Mammary epithelial cell (primary cell): ENCODE measurements at regions of chr12 and their contacts with region 1.

Region 1: GRCh38 chr12:43805860-43806736 is at the start of gene TWF1:
- DNase-seq: peak; percentile 84
- H3K4me3 ChIP-seq: peak within 1 kb of the TSS; percentile 70 to 99 (median 95)
- H3K27ac ChIP-seq: peak within 1 kb of the TSS; percentile 96
- H3K4me1 ChIP-seq: peaks cover 14% of the 10 kb centered on the region
- H3K27me3 ChIP-seq: no peaks in the 10 kb centered on the region
- CTCF ChIP-seq: peak; percentile 4 to 46
- total RNA-seq, gene TWF1: 170 to 187 TPM

Region 2: DNA sequence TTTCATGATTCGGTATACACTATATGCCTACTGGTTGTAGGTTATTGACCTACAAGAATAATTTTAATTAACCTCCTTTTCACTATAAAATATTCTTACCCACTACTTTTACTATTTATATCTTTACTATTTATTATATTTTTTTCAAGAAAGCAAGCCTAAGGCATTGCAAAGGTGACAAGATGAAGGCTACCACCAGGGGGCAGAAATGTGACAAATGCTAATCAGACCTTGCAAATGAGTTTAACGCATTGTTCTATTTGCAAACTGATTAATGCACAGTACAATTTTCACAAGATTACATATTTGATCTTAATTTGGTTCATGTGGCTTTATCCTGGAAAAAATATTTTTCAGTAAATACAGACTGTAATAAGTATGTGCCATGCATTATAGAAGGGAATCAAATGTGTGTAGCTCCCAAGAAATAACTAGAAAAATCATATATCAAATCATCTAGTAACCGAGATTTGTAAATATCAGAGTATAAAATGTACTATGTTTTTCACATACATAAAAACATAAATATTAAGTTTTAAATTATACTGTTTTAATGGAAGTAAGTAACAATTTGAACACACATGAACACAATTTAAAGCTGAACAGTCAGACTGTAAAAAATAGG is 361.0 kb before region 1 on chr12:
- CTCF ChIA-PET with region 1: no interaction called
- dilution Hi-C with region 1: no loop called
- in situ Hi-C with region 1: no loop called
- intact Hi-C with region 1: no loop called
- DNase-seq: peak; percentile 45
- H3K4me3 ChIP-seq: no peak overlapping the region
- H3K27ac ChIP-seq: no peak overlapping the region
- H3K4me1 ChIP-seq: no peaks in the 10 kb centered on the region
- H3K27me3 ChIP-seq: peaks cover 2% of the 10 kb centered on the region
- CTCF ChIP-seq: peak; percentile 82 to 86

Region 3: DNA sequence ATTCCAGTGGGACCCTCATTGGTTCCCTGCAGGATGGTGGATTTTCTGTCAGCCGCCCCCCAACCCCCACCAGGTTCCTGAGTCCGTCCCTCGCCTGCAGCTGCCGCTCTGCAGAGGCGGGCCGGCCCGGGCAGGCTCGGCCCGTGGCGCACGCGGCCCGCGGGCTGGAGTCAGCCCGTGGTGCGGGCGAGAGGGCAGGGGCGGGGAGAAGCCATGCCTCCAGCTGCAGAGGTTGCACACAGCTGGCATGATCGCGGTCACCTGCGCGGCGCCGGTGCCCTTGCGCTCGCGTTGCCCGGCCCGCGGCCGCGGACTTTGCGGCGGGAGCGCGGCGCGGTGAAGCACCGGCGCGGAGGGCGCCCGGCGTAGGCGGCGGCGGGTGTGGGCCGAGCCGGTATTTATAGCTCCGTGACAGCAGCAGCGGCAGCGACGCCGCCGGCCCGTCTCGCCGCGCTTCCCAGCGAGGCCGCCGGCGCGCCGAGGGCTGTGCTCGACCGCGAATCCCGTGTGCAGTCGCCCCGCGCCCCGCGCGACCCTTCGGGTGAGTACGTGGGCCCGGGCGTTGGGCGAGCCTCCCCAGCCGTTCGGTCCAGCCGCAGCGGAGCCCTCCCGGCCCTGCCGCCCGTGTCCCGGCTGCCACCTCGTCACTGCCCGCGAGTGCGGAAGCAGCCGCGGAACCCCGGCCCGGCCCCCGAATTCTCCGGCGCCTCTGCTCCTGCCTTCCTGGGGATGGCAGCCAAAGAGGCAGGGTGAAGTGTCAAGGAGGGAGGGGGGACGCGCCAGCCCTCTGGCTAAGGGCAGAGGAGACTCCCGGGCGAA is 29.8 kb after region 1 on chr12 and contains the start of gene TMEM117:
- CTCF ChIA-PET with region 1: interaction called, 3 read pairs
- dilution Hi-C with region 1: no loop called
- in situ Hi-C with region 1: no loop called
- intact Hi-C with region 1: loop called (anchors 2 kb)
- DNase-seq: peak; percentile 59
- H3K4me3 ChIP-seq: peak within 1 kb of the TSS; percentile 76 to 89 (median 86)
- H3K27ac ChIP-seq: peak within 1 kb of the TSS; percentile 83
- H3K4me1 ChIP-seq: peaks cover 11% of the 10 kb centered on the region
- H3K27me3 ChIP-seq: no peaks in the 10 kb centered on the region
- CTCF ChIP-seq: no peak
- total RNA-seq, gene TMEM117: 20.8 to 26.5 TPM

Region 4: DNA sequence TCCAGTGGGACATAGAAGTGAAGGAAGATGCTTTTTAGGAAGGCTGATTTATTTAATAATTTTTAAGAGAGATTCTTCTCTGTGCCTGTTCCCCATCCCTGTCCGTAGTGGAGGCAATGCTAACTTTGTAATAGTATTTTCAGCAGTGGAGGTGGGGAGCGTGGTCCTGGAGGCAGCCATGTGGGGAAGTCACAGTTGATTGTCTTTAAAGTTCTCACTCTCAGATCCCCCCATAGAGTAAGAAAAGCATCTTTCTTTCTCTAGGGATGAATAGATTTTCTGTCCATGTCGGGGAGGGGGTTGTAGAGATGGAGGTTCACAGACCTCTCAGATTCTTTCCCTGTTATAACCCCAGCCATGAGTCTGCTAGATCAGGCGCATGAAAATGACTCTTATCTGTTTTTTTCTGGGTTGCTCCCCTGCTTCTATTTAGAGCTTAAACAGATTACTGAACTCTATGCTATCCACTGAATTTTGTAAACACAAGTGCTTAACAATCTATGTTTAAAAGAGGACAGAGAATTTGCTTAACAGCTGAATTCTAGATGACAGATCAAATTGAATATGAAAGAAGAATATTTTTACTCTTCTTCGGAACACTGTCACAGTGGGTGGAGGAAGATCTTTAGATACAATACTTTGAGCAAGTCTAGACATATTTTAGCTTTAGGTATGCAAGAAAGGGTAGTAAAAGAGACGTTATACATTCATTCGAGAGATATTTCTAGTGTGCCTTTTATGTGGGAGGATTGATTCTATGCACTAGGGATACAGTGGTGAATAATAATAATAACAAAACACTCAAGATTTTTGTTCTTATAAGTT is 55.1 kb after region 1 on chr12:
- CTCF ChIA-PET with region 1: no interaction called
- dilution Hi-C with region 1: no loop called
- in situ Hi-C with region 1: no loop called
- intact Hi-C with region 1: loop called (anchors 5 kb)
- DNase-seq: peak; percentile 74
- H3K4me3 ChIP-seq: peak overlapping the region in 2 of 3 experiments; percentile 4 to 43
- H3K27ac ChIP-seq: peak overlapping the region; percentile 79
- H3K4me1 ChIP-seq: peaks cover 18% of the 10 kb centered on the region
- H3K27me3 ChIP-seq: no peaks in the 10 kb centered on the region
- CTCF ChIP-seq: no peak